CD8-positive, alpha-beta T cell (primary cell): ENCODE measurements at regions of chr20 and their contacts with region 1.

Region 1: DNA sequence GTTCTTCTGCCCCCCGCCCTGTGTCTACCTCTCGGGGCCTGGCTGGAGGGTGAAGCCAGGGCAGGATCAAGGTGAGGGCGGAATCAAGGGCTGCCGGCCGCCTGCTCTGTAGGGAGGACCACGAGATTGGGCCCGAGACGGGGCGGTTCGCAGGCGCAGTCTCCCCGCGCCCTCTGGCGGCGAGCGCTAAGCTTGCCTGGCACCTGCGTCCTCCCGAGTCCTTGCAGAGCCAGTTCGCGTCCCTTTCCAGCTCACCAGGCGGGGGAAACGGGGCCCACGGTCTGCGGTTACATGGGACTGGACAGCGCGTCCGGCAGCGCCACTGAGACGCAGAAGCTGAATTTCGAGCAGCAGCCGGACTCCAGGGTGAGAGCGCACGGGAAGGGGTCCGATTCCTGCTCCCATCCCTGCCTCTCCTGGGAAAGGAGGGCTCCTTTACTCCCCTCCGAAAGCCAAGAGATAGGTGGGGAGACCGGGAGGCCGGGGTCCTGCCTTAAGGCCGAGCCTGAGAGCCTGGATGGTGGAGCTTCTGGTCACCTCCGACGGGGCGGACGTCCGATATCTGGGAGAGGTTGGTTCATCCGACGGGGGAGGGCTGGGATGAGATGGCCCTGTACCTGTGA is 3.6 kb upstream of the MATN4 start:
- DNase-seq: peak; percentile 24 to 69 (median 52)
- ATAC-seq: peak; percentile 66
- H3K4me3 ChIP-seq: no peak overlapping the region
- H3K4me3 Mint-ChIP-seq: no peak overlapping the region
- H3K27ac ChIP-seq: no peak overlapping the region
- H3K27ac Mint-ChIP-seq: no peak overlapping the region
- H3K4me1 ChIP-seq: no peaks in the 10 kb centered on the region
- H3K4me1 Mint-ChIP-seq: peaks cover 6% of the 10 kb centered on the region
- H3K27me3 ChIP-seq: peaks cover 0 to 10% of the 10 kb centered on the region in 2 experiments
- H3K27me3 Mint-ChIP-seq: peaks cover 48% of the 10 kb centered on the region
- CTCF ChIP-seq: peak; percentile 67

Region 2: DNA sequence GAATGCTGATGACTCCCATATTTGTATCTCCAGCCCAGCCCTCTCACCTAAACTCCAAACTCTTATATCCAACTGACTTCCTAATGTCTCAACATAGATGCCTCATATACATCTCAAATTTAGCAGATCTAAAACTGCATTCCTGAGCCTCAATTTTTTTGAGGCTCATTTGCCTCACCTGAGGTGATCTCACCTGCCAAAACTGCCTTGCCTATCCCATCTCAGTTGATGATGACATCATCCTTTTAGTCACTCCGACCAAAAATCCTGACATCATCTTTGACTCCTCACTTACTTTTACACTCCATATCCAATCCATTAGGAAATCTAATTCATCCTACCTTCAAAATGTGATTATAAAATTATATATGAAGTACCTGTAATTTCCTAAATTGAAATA is 31.7 kb before region 1 on chr20:
- CTCF ChIA-PET with region 1: no interaction called
- POLR2A ChIA-PET with region 1: no interaction called
- intact Hi-C with region 1: no loop called
- DNase-seq: no peak
- ATAC-seq: no peak
- H3K4me3 ChIP-seq: no peak overlapping the region
- H3K4me3 Mint-ChIP-seq: no peak overlapping the region
- H3K27ac ChIP-seq: no peak overlapping the region
- H3K27ac Mint-ChIP-seq: no peak overlapping the region
- H3K4me1 ChIP-seq: no peaks in the 10 kb centered on the region
- H3K4me1 Mint-ChIP-seq: no peaks in the 10 kb centered on the region
- H3K27me3 ChIP-seq: no peaks in the 10 kb centered on the region
- H3K27me3 Mint-ChIP-seq: peaks cover 32% of the 10 kb centered on the region
- CTCF ChIP-seq: no peak

Region 3: DNA sequence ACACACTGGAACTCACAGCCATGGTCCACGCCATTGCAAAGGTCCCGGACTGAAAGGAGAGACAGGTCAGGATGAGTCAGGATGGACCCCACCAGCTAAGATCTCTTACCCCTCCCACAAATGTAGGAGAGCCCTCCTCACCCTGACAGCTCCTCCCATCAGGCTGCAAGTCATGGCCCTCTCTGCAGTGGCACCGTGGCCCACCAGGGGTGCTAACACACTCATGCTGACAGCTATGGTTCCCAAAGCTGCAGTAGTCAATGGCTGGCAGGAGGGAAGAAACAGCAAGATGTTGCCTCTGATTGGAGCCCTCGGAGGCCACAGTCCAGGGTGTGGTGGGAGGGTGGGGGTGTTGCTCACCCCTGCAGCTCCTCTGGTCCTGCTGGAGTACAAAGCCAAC is 10.7 kb before region 1 on chr20:
- CTCF ChIA-PET with region 1: interaction called, 10 read pairs
- POLR2A ChIA-PET with region 1: no interaction called
- intact Hi-C with region 1: no loop called
- DNase-seq: peak in 2 of 9 experiments; percentile 17 to 36
- ATAC-seq: peak; percentile 71
- H3K4me3 ChIP-seq: no peak overlapping the region
- H3K4me3 Mint-ChIP-seq: no peak overlapping the region
- H3K27ac ChIP-seq: no peak overlapping the region
- H3K27ac Mint-ChIP-seq: no peak overlapping the region
- H3K4me1 ChIP-seq: no peaks in the 10 kb centered on the region
- H3K4me1 Mint-ChIP-seq: no peaks in the 10 kb centered on the region
- H3K27me3 ChIP-seq: peaks cover 0 to 5% of the 10 kb centered on the region in 2 experiments
- H3K27me3 Mint-ChIP-seq: peaks cover 41% of the 10 kb centered on the region
- CTCF ChIP-seq: peak; percentile 13